B cell (primary cell): ENCODE measurements at regions of chr1 and their contacts with region 1.

Region 1: DNA sequence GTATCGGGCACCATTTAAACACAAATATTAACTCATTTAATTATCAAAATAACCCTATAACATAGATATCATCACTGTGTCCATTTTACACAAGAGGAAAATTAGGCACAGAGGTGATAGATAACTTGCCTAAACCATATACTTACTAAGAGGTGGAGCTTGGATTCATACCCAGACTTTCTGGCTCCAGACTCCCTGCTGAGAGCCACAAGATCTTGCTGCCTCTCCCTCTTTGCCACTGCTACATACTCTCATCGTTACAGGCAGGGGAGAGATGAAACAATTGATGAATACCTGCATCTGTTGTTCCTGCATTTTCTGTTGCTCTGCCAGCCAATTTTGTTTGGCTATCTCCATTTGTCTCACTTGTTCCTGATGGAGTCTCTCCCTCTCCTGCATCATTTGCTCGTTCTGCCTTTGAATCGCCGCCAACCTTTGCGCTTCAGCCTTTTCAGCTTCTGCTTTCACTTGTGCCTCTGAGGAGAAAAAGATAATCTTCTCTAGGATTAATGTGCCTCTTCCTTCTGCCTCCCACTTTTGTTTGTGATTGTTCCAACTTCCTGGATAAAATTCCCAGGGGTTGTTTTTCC is 10.6 kb downstream of the GBP5 start:
- DNase-seq: no peak
- ATAC-seq: no peak
- H3K4me3 ChIP-seq: no peak overlapping the region
- H3K4me3 Mint-ChIP-seq: no peak overlapping the region
- H3K27ac ChIP-seq: no peak overlapping the region
- H3K27ac Mint-ChIP-seq: no peak overlapping the region
- H3K4me1 ChIP-seq: peaks cover 0 to 7% of the 10 kb centered on the region in 2 donors
- H3K4me1 Mint-ChIP-seq: peaks cover 9% of the 10 kb centered on the region
- H3K27me3 ChIP-seq: no peaks in the 10 kb centered on the region
- H3K27me3 Mint-ChIP-seq: no peaks in the 10 kb centered on the region
- CTCF ChIP-seq: no peak

Region 2: GRCh38 chr1:89221341-89221740 is 40.7 kb before region 1 on chr1:
- CTCF ChIA-PET with region 1: no interaction called
- POLR2A ChIA-PET with region 1: no interaction called
- intact Hi-C with region 1: loop called (anchors 5 kb)
- DNase-seq: no peak
- ATAC-seq: no peak
- H3K4me3 ChIP-seq: no peak overlapping the region
- H3K4me3 Mint-ChIP-seq: no peak overlapping the region
- H3K27ac ChIP-seq: no peak overlapping the region
- H3K27ac Mint-ChIP-seq: no peak overlapping the region
- H3K4me1 ChIP-seq: no peaks in the 10 kb centered on the region
- H3K4me1 Mint-ChIP-seq: no peaks in the 10 kb centered on the region
- H3K27me3 ChIP-seq: no peaks in the 10 kb centered on the region
- H3K27me3 Mint-ChIP-seq: no peaks in the 10 kb centered on the region
- CTCF ChIP-seq: no peak